Calu3 (cell line): ENCODE measurements at regions of chr11 and their contacts with region 1.

Region 1: DNA sequence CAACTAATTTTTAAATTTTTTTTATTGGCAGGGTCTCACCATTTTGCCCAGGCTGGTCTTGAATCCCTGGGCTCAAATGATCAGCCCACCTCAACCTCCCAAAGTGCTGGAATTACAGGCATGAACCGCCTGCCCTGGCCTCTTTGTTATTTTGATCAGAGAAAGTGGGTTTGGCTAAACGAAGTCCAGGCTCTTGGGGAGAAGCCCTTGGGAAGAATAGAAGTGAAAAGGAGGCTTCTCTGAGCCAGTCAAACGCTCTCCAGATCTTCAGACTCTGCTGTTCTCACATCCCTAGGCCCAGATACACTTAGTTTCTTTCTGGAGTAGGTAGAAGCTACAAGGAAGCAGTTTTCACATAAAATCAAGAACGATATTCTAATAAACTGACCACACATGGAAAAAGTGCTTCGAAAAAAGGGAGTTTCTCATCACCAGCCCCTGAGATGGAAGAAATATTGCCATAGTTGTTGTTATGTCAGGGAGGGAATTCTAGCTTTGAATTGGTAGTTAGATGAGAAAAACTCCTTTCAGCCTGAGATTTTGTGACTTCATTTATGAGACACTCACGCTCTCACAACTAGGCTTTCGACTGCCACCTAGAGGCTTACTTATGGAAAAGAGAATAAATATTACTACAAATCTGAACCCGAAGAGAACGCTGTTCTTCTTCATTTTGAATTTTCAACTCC is 41.7 kb upstream of the AQP11 start:
- DNase-seq: peak; percentile 44
- H3K4me3 Mint-ChIP-seq: no peak overlapping the region
- H3K27ac Mint-ChIP-seq: peak overlapping the region; percentile 19
- H3K4me1 Mint-ChIP-seq: peaks cover 11% of the 10 kb centered on the region
- H3K27me3 Mint-ChIP-seq: no peaks in the 10 kb centered on the region
- CTCF ChIP-seq: peak; percentile 36

Region 2: GRCh38 chr11:77187776-77188632 is 360.0 kb before region 1 on chr11:
- CTCF ChIA-PET with region 1: interaction called, 5 read pairs
- intact Hi-C with region 1: loop called (anchors 1 kb)
- DNase-seq: peak; percentile 85
- H3K4me3 Mint-ChIP-seq: no peak overlapping the region
- H3K27ac Mint-ChIP-seq: no peak overlapping the region
- H3K4me1 Mint-ChIP-seq: no peaks in the 10 kb centered on the region
- H3K27me3 Mint-ChIP-seq: peaks cover 21% of the 10 kb centered on the region
- CTCF ChIP-seq: peak; percentile 69

Region 3: DNA sequence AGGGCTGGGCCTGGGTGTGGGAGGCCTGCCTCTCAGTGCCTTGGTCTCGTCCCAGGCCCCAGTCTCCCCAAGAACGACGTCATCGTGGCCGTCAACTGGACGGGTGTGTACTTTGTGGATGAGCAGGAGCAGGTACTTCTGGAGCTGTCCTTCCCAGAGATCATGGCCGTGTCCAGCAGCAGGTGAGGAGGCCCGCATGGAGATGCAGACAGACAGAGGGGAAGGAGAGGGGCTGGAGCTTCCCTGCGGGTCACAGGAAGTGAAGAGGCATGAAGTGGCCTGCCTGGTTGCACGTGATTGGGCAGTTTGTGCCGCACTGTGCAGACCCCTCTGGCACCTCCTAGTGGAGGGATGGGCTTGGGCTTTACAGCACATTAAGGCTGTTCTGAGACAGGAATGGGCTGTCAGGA is 349.6 kb before region 1 on chr11:
- CTCF ChIA-PET with region 1: interaction called, 13 read pairs
- intact Hi-C with region 1: no loop called
- DNase-seq: peak; percentile 34
- H3K4me3 Mint-ChIP-seq: no peak overlapping the region
- H3K27ac Mint-ChIP-seq: no peak overlapping the region
- H3K4me1 Mint-ChIP-seq: no peaks in the 10 kb centered on the region
- H3K27me3 Mint-ChIP-seq: no peaks in the 10 kb centered on the region
- CTCF ChIP-seq: no peak

Region 4: DNA sequence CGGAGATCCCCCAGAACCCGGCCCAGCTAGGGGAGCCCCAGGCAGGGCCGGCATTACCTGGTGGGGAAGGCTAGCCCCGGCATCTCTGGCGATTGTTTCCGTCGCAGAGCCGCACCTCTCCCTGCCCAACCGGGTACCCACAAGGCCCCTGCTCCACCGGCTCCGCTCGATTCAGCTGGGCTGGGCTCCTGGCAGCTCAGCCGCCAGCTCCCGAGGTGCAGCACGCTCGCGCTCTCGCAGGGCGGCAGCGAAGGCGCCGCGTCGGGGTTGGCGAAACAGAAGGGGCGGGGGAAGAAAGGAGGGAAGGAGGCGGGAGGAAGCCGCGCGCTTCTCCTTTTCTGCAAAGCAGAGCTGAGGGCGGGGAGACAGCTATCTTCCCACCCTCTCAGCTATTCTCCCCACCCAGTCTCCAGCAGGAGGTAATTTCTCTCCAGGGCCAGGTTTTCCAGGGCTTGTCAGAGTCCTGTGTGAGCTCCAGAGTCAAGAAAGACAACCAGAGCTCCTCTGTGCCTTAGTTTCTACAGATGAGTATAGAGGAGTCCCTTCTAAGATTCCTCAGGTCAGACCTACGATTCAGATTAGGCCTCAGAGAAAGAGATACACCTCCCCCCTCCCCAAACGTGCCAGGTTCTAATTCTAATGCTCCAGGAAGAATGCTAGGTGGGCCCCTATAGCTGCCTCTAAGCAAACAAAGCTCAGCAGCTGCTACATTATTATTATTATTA is 136.1 kb before region 1 on chr11:
- CTCF ChIA-PET with region 1: interaction called, 9 read pairs
- intact Hi-C with region 1: loop called (anchors 10 kb)
- DNase-seq: peak; percentile 86
- H3K4me3 Mint-ChIP-seq: peak overlapping the region; percentile 88
- H3K27ac Mint-ChIP-seq: peak overlapping the region; percentile 74
- H3K4me1 Mint-ChIP-seq: peaks cover 52% of the 10 kb centered on the region
- H3K27me3 Mint-ChIP-seq: no peaks in the 10 kb centered on the region
- CTCF ChIP-seq: no peak

Region 5: DNA sequence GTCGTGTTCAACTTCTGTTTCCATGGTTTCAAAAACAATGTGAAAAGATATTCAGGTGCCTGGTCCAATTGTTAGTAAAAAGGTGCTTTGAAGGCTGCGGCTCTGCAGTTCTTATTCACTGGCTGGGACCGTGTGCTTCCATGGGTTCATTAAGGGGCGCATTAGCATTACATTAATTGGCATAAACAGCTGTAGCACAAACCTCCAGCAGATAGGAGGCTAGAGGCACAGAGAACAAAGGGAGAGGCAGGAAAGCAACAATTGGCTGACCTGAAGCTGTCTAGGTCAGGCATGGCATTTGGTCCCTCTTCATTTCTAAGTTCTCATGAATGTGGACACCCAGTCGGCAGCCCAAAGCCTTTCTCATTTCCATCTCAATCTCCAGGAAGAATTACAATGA is 90.7 kb before region 1 on chr11:
- CTCF ChIA-PET with region 1: interaction called, 10 read pairs
- intact Hi-C with region 1: no loop called
- DNase-seq: no peak
- H3K4me3 Mint-ChIP-seq: no peak overlapping the region
- H3K27ac Mint-ChIP-seq: no peak overlapping the region
- H3K4me1 Mint-ChIP-seq: peaks cover 19% of the 10 kb centered on the region
- H3K27me3 Mint-ChIP-seq: no peaks in the 10 kb centered on the region
- CTCF ChIP-seq: no peak

Region 6: GRCh38 chr11:77473801-77474683 is 74.0 kb before region 1 on chr11 and contains the start of gene PAK1:
- CTCF ChIA-PET with region 1: interaction called, 8 read pairs
- intact Hi-C with region 1: loop called (anchors 1 kb)
- DNase-seq: peak; percentile 92
- H3K4me3 Mint-ChIP-seq: peak within 1 kb of the TSS; percentile 73
- H3K27ac Mint-ChIP-seq: peak within 1 kb of the TSS; percentile 98
- H3K4me1 Mint-ChIP-seq: peaks cover 39% of the 10 kb centered on the region
- H3K27me3 Mint-ChIP-seq: no peaks in the 10 kb centered on the region
- CTCF ChIP-seq: no peak
- total RNA-seq, gene PAK1: 56.3 and 58.5 TPM in 2 replicates

Region 7: DNA sequence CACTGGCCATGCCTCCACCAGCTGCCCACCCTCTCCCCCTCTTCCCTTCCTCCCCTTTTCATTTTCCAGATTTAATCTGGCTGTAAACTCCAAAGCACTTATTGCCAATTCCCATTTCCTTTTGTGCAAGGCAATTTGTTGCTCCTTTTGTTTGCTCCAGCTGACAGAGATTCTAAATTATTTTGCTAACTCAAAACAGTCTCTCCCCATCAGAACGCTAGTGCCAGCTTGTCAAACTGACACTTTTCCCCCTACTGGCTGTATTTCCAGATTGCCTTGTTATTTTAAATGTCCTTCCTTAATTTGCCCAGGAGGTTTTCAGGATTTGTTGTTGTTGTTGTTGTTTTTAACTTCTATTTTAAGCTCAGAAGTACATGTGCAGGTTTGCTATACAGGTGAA is 17.1 kb before region 1 on chr11:
- CTCF ChIA-PET with region 1: no interaction called
- intact Hi-C with region 1: no loop called
- DNase-seq: no peak
- H3K4me3 Mint-ChIP-seq: no peak overlapping the region
- H3K27ac Mint-ChIP-seq: no peak overlapping the region
- H3K4me1 Mint-ChIP-seq: no peaks in the 10 kb centered on the region
- H3K27me3 Mint-ChIP-seq: no peaks in the 10 kb centered on the region
- CTCF ChIP-seq: no peak

Region 8: GRCh38 chr11:77619576-77620198 is 71.7 kb after region 1 on chr11:
- CTCF ChIA-PET with region 1: no interaction called
- intact Hi-C with region 1: loop called (anchors 1 kb)
- DNase-seq: peak; percentile 59
- H3K4me3 Mint-ChIP-seq: no peak overlapping the region
- H3K27ac Mint-ChIP-seq: no peak overlapping the region
- H3K4me1 Mint-ChIP-seq: no peaks in the 10 kb centered on the region
- H3K27me3 Mint-ChIP-seq: no peaks in the 10 kb centered on the region
- CTCF ChIP-seq: peak; percentile 37